Activated CD8-positive, alpha-beta T cell treated with anti-CD3 and anti-CD28 coated beads, Interleukin-2, amount 10 ng/mL, durations not matched to agents 7 days and 5 days (primary cell): ENCODE measurements at regions of chr1 and their contacts with region 1.

Region 1: GRCh38 chr1:2194898-2195673 is 514 bp upstream of the FAAP20 start:
- DNase-seq: peak; percentile 92
- ATAC-seq: peak; percentile 81
- H3K4me3 Mint-ChIP-seq: peak overlapping the region; percentile 81
- H3K27ac Mint-ChIP-seq: peak overlapping the region; percentile 93
- H3K4me1 Mint-ChIP-seq: peaks cover 46% of the 10 kb centered on the region
- H3K27me3 Mint-ChIP-seq: no peaks in the 10 kb centered on the region

Region 2: DNA sequence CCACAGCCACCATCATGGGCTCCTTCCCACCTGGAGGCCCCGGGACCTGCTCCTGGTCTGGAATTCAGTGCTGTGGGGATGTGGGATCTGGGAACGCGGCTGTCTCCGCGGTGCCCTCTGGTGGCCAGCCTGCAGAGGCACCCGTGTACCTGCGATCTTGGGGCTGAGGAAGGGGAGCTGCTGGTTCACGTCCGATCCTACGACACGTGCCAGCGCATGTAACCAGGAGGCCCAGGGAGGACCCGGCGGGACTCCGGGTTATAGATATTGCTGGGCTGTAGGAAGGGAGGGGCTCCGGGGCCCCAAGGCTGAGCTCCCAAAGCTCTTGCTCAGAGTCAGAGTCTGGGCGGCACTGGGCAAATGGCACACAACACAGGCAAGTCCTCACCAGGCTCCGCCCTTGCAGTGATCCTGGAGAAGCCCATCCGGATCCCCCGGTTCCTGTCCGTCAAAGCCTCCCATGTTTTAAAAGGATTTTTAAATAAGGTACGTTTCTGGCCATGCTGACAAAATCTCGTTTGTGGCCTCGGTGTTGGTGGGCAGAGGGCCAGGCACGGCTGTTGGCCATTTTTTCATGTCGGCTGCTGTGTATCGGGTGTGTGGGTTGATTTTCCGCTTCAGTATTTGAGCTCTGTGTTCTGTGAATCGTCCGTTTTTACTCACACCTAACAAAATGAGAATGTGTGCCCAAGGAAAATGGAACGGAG is 20.6 kb before region 1 on chr1:
- CTCF ChIA-PET with region 1: interaction called, 12 read pairs
- POLR2A ChIA-PET with region 1: no interaction called
- DNase-seq: peak; percentile 43
- ATAC-seq: peak; percentile 68
- H3K4me3 Mint-ChIP-seq: no peak overlapping the region
- H3K27ac Mint-ChIP-seq: no peak overlapping the region
- H3K4me1 Mint-ChIP-seq: no peaks in the 10 kb centered on the region
- H3K27me3 Mint-ChIP-seq: no peaks in the 10 kb centered on the region

Region 3: GRCh38 chr1:2227346-2228153 is 32.5 kb after region 1 on chr1:
- CTCF ChIA-PET with region 1: interaction called, 31 read pairs
- POLR2A ChIA-PET with region 1: interaction called, 7 read pairs
- DNase-seq: peak; percentile 95
- ATAC-seq: peak; percentile 81
- H3K4me3 Mint-ChIP-seq: peak overlapping the region; percentile 49
- H3K27ac Mint-ChIP-seq: peak overlapping the region; percentile 69
- H3K4me1 Mint-ChIP-seq: peaks cover 30% of the 10 kb centered on the region
- H3K27me3 Mint-ChIP-seq: peaks cover 8% of the 10 kb centered on the region

Region 4: GRCh38 chr1:2290595-2291510 is 95.8 kb after region 1 on chr1:
- CTCF ChIA-PET with region 1: interaction called, 12 read pairs
- POLR2A ChIA-PET with region 1: interaction called, 3 read pairs
- DNase-seq: peak; percentile 92
- ATAC-seq: peak; percentile 83
- H3K4me3 Mint-ChIP-seq: peak overlapping the region; percentile 78
- H3K27ac Mint-ChIP-seq: peak overlapping the region; percentile 98
- H3K4me1 Mint-ChIP-seq: peaks cover 78% of the 10 kb centered on the region
- H3K27me3 Mint-ChIP-seq: no peaks in the 10 kb centered on the region

Region 5: DNA sequence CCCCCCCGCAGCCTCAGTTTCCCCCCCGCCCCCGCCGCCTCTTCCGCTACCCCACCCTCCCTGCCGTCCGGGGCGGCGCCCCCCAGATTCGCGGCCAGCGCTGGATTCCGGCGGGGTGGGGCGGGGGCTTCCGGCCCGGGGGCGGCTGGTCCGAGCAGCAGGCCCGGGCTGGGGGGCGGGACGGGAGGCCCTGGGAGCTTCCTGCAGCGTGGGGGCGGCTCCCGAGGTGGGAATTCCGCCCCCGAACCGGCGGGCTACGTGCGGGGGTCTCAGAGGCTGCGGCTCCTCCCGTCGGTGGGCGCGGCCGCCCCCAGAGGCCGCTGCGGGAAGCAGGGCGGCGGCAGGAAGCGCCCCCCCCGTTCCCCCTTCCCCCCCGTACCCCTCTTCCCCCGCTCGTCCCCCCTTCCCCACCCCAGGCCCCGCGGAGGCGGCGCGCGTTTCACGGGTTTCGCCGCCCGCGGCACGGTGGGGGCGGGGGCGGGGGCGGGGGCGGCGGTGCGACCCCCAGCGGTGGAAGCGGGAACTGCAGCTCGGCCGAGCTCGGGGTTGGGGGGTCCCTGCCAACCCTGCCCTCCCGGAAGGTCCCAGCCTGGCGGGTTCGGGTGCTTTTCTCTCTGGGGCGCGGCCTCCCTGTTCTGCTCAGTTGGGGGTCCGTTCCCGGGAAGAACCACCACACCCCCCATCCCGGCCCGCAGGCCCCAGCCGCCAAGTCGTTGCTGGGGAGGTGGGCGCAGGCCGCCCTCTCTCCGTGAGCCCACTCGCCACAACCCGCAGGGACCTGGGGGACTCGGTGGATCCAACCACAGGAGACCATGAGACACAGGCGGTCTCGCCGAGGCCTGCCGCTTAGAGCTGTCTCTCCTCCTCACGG is 120.0 kb after region 1 on chr1:
- CTCF ChIA-PET with region 1: interaction called, 36 read pairs
- POLR2A ChIA-PET with region 1: interaction called, 3 read pairs
- DNase-seq: peak; percentile 63
- ATAC-seq: peak; percentile 37
- H3K4me3 Mint-ChIP-seq: peak overlapping the region; percentile 53
- H3K27ac Mint-ChIP-seq: peak overlapping the region; percentile 52
- H3K4me1 Mint-ChIP-seq: peaks cover 27% of the 10 kb centered on the region
- H3K27me3 Mint-ChIP-seq: no peaks in the 10 kb centered on the region

Region 6: DNA sequence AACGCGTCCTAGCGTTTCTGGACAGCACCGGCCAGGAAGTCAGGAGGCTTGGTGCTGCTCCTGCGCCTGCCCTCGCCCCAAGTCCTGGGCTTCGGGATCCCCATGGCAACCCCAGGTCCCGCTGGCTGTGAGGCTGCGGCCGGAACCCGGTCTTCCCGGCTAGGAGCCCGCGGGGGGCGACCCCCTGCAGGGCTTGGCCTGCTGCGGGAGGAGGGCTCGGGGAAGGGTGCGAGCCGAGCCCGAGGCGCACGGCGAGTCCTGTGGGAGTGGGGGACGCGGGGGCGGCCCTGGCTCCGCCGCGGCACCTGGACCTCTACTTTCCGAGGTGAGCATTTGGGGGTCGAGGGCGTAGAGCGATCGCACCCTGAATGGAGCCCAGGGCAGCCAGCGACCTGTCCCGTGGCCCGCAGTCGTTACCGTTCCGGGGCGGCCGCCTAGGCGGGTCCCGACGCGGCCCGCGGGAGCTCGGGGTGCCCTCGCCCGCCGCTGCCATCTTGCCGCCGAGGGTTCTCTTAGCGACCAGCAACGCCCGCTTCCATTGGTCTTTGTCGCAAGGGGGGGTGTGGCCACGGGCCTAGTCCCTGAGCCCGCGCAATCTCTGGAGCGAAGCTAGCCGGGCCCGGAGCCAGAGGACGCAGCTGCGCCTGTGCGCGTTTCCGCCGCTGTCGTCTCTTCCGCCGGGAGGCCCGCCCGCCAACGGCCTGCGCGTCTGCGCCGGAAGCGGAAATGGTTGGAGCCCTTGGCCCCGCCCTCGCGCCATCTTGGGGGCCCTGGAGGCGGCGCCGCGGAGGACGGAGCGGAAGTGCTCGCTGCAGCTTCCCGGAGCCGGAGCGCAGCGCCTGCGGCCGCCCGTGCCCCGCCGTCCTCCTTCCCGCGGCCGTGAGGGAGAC is 196.2 kb after region 1 on chr1 and contains the starts of genes MORN1 and RER1:
- CTCF ChIA-PET with region 1: interaction called, 55 read pairs
- POLR2A ChIA-PET with region 1: interaction called, 10 read pairs
- DNase-seq: peak; percentile 99
- ATAC-seq: peak; percentile 98
- H3K4me3 Mint-ChIP-seq: peak within 1 kb of the TSS; percentile 92
- H3K27ac Mint-ChIP-seq: peak within 1 kb of the TSS; percentile 92
- H3K4me1 Mint-ChIP-seq: peaks cover 40% of the 10 kb centered on the region
- H3K27me3 Mint-ChIP-seq: no peaks in the 10 kb centered on the region
- total RNA-seq, gene MORN1: 6.2 to 7.9 TPM
- total RNA-seq, gene RER1: 148 to 151 TPM

Region 7: DNA sequence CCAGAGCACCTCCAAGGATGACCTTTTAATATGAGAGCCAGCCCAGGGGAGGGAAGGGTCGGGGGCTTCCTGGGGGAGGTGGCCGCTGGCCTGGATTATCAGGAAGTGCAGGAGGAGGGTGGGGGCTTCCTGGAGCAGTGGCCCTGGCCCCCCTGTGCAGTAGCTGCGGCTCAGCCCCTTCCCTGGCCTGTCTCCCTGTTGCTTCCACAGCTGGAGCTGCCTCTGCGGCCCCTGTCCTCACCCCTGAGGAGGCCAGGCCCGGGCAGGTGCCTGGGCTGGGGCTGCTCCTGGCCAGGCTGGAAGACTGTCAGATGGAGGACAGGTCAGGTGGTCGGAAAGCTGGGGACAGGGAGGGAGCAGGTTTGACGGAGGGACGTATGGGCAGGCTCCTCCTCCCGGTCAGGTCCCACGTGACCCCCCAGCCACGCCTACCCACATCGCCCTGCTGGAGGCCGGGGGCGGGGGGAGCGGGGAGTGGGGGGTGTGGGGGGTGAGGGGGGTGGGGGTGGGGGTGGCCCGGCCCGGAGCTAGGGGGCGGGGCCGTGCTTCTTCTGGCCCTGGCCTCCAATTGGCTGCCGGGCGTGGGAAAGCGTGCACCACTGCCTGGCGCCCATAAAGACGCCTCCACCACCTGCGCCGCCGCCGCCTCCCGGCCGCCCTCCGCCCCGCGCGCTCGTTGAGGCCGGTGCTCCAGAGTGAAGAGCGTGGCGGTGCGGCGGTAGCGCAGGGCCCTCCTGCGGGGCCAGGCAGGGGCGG is 350.9 kb after region 1 on chr1:
- CTCF ChIA-PET with region 1: interaction called, 13 read pairs
- POLR2A ChIA-PET with region 1: interaction called, 4 read pairs
- DNase-seq: peak; percentile 94
- ATAC-seq: peak; percentile 63
- H3K4me3 Mint-ChIP-seq: peak overlapping the region; percentile 85
- H3K27ac Mint-ChIP-seq: peak overlapping the region; percentile 98
- H3K4me1 Mint-ChIP-seq: peaks cover 37% of the 10 kb centered on the region
- H3K27me3 Mint-ChIP-seq: peaks cover 4% of the 10 kb centered on the region